GM18951 (cell line): ENCODE measurements at regions of chr2 and their contacts with region 1.

Region 1: DNA sequence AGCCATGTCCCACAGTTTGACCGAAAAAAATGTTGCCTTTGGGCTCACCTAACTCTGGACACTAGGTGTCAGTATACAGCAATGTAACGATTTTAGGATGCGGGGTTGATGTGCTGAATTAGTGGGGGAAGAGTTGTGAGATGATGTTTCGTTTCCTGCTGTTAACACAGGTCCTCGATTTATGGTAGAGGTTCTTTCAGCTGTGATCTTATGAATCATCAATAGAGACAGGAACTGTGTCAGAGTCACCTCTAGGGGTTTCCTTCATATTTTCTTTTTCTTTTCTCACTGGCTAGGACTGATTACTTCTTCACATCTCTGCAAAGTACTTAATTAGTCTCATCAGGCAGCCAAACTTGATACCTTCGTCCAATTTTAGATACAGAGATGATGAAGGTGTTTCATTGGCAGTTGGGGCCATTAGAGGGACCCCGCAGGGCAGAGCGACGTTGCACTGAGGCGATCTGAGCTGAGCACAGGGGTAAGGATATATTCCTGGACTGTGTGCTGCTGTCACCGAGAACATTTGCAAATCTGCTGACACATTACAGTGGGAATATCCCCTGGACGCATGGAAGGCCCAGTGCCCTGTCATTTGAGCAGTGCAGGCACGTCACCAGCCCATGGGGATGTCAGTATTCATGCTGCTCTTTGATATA is 10.2 kb upstream of the MMADHC start:
- POLR2A ChIP-seq: no peak

Region 2: DNA sequence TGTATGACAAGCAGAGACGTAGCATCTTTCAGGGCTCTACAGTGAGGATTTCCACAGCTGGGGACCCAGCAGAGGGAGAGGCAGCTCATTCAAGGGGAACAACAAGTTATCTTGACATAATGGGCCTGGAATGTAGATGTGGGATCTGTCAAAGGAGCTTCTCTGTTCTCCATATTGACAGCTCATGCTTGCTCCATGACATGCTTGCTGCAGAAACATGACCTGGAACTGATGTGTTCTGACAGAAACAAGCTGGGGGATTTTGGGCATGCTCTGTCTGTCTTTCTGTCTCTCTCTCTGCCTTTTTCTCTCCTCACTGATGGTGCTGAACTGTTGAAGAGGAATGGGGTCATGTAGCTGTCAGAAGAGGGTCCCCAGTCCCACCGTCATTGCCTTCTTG is 89.8 kb before region 1 on chr2:
- in situ Hi-C with region 1: no loop called
- POLR2A ChIP-seq: no peak

Region 3: GRCh38 chr2:151241224-151241623 is 1643.4 kb after region 1 on chr2:
- in situ Hi-C with region 1: loop called (anchors 10 kb)
- POLR2A ChIP-seq: no peak